ENCODE measurements at regions of chr3 and their contacts with region 1.

Region 1: GRCh38 chr3:35965908-35966307 is 326.6 kb downstream of the ARPP21 start:
- DNase-seq: no peak
- H3K4me3 ChIP-seq: no peak overlapping the region
- H3K27ac ChIP-seq: no peak overlapping the region
- H3K4me1 ChIP-seq: no peaks in the 10 kb centered on the region
- H3K27me3 ChIP-seq: no peaks in the 10 kb centered on the region
- CTCF ChIP-seq: no peak

Region 2: GRCh38 chr3:36700537-36701248 is 734.8 kb after region 1 on chr3:
- intact Hi-C with region 1: loop called (anchors 5 kb)
- DNase-seq: peak; percentile 23
- H3K4me3 ChIP-seq: no peak overlapping the region
- H3K27ac ChIP-seq: no peak overlapping the region
- H3K4me1 ChIP-seq: no peaks in the 10 kb centered on the region
- H3K27me3 ChIP-seq: no peaks in the 10 kb centered on the region
- CTCF ChIP-seq: peak; percentile 27